ENCODE measurements at regions of chr3 and their contacts with region 1.

Region 1: DNA sequence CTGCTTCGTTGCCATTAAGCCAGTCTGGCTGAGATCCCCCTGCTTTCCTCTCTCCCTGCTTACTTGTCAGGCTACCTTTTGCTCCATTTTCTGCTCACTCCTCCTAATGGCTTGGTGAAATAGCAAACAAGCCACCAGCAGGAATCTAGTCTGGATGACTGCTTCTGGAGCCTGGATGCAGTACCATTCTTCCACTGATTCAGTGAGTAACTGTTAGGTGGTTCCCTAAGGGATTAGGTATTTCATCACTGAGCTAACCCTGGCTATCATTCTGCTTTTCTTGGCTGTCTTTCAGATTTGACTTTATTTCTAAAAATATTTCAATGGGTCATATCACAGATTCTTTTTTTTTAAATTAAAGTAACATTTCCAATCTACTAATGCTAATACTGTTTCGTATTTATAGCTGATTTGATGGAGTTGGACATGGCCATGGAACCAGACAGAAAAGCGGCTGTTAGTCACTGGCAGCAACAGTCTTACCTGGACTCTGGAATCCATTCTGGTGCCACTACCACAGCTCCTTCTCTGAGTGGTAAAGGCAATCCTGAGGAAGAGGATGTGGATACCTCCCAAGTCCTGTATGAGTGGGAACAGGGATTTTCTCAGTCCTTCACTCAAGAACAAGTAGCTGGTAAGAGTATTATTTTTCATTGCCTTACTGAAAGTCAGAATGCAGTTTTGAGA is 25.0 kb downstream of the CTNNB1 start:
- DNase-seq: peak; percentile 82
- H3K4me3 ChIP-seq: no peak overlapping the region
- CTCF ChIP-seq: no peak

Region 2: DNA sequence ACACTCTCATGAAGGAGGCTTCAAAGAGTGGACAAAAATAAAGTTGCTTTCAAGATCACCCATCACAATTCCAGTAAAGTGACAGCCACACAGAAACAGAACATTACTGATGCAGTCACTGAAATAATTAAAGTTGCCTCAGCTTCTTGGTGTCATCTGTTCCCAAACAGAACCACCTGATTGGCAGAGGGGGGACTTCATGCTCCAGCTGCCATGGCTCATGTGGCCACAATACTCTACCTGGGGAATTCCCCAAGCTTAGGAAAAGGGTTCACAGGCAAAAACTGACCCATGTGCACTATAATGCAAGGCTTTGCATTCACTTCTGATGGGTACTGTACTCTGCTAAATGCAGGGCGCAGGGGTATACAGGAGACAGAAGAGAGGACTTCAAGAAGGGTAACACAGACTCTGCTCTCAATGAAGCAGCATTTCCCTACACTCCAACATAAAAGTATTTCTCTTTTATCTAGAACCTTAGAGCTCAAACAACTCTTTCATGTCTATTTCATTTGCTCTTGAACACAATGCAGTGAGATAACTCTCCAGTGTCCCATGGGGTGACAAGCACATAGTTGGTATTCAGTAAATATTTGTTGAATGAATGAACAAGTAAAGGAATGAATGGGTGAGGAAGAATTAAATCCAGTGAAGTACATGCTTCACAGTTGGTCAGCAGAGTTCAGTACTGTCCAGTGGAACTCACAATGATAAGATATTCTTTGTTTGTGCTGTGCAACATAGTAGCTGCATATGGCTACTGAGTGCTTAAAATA is 33.6 kb before region 1 on chr3:
- CTCF ChIA-PET with region 1: no interaction called
- POLR2A ChIA-PET with region 1: no interaction called
- DNase-seq: no peak
- H3K4me3 ChIP-seq: no peak overlapping the region
- CTCF ChIP-seq: no peak

Region 3: DNA sequence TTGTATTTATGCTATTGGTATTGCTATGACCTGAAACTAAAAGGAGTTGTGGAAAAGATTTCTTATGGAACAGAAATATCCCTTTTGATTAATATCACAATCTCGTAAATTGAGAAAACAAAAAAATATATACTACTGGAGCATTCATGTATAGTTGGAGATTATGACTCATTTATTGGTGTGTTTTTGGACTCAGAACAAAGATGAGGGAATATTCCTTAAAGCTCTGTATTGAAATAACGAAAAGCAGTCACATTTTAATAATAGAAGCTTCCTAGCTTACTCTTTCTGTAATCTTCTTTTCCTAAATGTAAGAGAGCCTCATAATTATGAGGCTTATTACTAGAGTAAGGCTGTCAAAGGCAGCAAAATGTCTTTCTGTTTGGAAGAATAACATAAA is 10.7 kb before region 1 on chr3:
- CTCF ChIA-PET with region 1: interaction called, 14 read pairs
- POLR2A ChIA-PET with region 1: interaction called, 4 read pairs
- DNase-seq: no peak
- H3K4me3 ChIP-seq: no peak overlapping the region
- CTCF ChIP-seq: no peak

Region 4: GRCh38 chr3:41244620-41245336 is 20.5 kb after region 1 on chr3:
- CTCF ChIA-PET with region 1: no interaction called
- POLR2A ChIA-PET with region 1: no interaction called
- DNase-seq: no peak
- H3K4me3 ChIP-seq: no peak overlapping the region
- CTCF ChIP-seq: no peak

Region 5: DNA sequence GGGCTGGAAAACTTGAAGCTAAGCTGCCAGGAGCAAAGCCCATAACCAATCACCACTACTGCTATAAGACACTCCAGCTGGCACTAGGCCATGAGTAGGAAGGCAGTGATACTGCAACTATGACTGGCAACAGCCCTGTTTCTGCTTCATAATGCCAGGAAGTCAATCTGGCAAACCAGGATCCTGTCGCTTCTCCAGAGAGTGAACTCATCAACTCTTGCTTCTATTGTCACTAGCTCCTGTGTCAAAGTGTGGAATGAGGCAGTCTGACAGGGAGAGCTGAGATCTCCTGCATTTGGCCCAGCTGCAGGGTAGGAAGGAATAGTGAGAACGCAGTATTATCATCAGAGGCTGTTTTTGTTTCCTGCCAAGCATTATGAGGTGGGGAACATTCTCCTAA is 80.3 kb after region 1 on chr3:
- CTCF ChIA-PET with region 1: no interaction called
- POLR2A ChIA-PET with region 1: no interaction called
- DNase-seq: no peak
- H3K4me3 ChIP-seq: no peak overlapping the region
- CTCF ChIP-seq: no peak

Measured in AG04449 (cell line).